ENCODE measurements at regions of chr2 and their contacts with region 1.

Region 1: DNA sequence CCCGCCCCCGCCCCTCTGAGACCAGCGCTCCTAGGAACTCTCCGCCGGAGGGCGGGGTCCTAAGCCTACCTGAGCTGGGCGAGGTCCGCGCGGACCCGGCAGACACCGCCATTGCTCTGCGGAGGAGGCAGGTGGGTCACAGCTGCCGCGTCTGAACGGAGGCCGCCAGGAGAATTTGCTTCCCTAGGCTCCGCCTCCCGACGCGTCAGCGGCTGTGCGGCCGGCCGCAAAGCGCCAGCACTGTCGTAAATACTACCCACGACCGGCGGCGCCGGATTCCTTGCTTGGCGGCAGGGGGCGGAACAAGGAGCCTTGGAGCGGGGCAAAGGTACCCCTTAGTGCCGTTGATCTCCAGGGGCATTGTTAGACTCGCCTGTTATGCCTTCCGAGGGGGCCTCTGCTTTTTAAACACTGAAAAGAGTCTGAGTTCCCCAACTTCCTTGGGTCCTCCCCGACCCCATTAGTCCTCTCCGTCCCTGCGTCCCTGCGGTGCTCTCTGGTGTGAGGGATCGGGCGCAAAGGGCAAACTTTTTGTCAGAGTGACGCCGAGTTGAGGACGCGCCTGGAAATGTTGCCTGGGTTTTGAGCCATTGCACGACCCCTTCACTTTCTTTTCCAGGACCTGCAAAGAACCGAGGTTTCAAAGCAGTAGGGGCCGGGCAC is at the start of gene GGCX:
- DNase-seq: peak; percentile 98
- ATAC-seq: peak; percentile 94
- H3K4me3 Mint-ChIP-seq: peak within 1 kb of the TSS; percentile 95
- H3K27ac Mint-ChIP-seq: peak within 1 kb of the TSS; percentile 93
- H3K4me1 Mint-ChIP-seq: peaks cover 33% of the 10 kb centered on the region
- H3K27me3 Mint-ChIP-seq: no peaks in the 10 kb centered on the region
- total RNA-seq, gene GGCX: 20.1 to 22.2 TPM

Region 2: DNA sequence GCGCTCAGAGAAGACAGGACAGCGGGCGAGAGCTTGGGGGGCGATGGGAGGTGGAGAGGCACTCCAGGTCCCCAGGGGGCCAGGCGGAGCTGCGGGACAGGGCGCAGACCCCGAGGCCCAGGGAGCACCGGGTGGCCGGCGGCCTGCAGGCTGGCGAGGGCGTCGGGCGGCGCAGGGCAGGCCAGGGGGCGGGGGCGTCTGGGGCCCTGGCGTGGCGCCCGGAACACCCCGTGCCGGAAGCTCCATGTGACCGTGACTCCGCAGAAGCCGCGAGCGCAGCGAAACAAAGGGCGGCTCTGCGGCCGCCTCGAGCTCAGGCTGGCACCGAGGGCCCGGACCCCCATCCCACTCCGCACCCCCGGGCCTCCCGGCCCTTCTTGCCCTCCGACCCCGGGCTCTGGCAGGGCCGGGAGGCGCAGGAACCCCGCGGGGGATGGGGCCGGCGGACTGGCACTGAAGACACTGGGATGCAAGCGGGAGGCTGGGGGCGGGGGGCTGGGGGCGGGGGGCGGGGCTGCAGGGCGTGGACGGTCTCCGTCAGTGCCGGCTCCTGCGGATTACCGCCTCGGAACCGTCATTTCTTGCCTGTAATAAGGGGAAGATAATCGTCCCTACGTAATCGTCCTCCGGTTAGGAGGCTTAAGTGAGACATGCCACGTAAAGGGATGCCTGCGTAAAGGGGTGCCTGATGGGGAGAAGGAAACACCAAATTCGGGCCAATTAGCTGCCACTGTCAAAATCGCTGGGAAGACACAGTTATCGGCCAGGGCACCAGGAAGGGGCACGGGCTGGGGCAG is 123.8 kb before region 1 on chr2:
- CTCF ChIA-PET with region 1: interaction called, 3 read pairs
- POLR2A ChIA-PET with region 1: interaction called, 3 read pairs
- intact Hi-C with region 1: loop called (anchors 1 kb)
- DNase-seq: peak; percentile 87
- ATAC-seq: peak; percentile 84
- H3K4me3 Mint-ChIP-seq: peak overlapping the region; percentile 73
- H3K27ac Mint-ChIP-seq: peak overlapping the region; percentile 93
- H3K4me1 Mint-ChIP-seq: peaks cover 28% of the 10 kb centered on the region
- H3K27me3 Mint-ChIP-seq: no peaks in the 10 kb centered on the region

Region 3: GRCh38 chr2:85577386-85578242 is 16.2 kb after region 1 on chr2 and contains the start of gene VAMP8:
- CTCF ChIA-PET with region 1: interaction called, 4 read pairs
- POLR2A ChIA-PET with region 1: interaction called, 3 read pairs
- intact Hi-C with region 1: loop called (anchors 1 kb)
- DNase-seq: peak; percentile 81
- ATAC-seq: peak; percentile 88
- H3K4me3 Mint-ChIP-seq: peak within 1 kb of the TSS; percentile 98
- H3K27ac Mint-ChIP-seq: peak within 1 kb of the TSS; percentile 91
- H3K4me1 Mint-ChIP-seq: peaks cover 25% of the 10 kb centered on the region
- H3K27me3 Mint-ChIP-seq: no peaks in the 10 kb centered on the region
- total RNA-seq, gene VAMP8: 98.3 to 106 TPM

Region 4: DNA sequence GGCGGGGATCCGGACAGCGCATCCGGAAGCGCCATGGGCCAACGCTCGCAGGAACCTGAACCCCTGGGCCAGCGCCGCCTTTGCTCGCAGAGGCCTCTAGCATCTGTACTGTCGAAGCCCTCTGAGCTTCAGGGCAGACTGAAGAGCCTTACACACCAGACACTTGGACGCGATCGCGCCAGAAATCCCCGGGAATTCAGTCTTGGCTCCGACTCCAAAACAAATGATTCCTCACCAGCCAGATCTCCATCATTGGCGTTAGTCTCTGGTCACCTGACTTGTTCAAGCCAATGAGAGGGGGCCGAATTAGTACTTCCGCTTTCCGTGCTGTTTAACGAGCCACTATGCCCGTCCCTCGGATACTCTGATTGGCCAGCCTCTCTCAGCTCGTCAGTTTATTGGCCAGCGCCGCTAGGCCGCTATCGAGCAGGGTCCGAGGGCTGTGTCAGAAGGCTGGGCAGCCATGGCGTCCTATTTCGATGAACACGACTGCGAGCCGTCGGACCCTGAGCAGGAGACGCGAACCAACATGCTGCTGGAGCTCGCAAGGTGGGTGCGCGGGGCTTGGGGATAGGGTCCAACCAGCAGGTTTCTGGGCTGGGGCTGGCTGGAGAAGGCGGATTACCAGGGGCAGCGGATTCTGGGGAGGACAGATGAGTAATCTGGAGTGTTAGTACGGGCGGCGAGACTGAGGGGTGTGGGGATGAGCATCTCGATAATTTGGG is 34.0 kb after region 1 on chr2 and contains the start of gene RNF181:
- CTCF ChIA-PET with region 1: no interaction called
- POLR2A ChIA-PET with region 1: interaction called, 4 read pairs
- intact Hi-C with region 1: loop called in 1 of 2 experiments (anchors 1 kb)
- DNase-seq: peak; percentile 94
- ATAC-seq: peak; percentile 100
- H3K4me3 Mint-ChIP-seq: peak within 1 kb of the TSS; percentile 100
- H3K27ac Mint-ChIP-seq: peak within 1 kb of the TSS; percentile 99
- H3K4me1 Mint-ChIP-seq: peaks cover 28% of the 10 kb centered on the region
- H3K27me3 Mint-ChIP-seq: no peaks in the 10 kb centered on the region
- total RNA-seq, gene RNF181: 113 to 140 TPM